ENCODE measurements at regions of chr9 and their contacts with region 1.

Region 1: DNA sequence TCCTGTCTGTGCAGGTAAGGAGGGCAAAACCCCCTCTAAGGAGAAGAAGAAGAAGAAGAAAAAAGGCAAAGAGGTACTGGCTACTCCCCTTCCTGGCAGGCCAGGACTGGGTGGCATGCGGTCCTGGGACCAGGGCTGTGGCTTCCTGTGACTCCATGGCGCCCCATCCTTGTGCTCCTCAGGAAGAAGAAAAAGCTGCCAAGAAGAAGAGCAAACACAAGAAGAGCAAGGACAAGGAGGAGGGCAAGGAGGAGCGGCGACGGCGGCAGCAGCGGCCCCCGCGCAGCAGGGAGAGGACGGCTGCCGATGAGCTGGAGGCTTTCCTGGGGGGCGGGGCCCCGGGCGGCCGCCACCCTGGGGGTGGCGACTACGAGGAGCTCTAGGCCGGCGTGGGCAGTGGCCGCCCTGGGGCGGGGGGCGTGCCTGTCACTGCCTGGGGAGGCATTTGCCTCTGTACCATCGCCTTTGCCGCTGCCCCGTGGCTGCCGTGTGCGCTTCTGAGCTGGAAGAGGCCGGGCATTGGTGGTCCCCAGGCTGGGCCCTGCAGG is 2.1 kb upstream of the AJM1 start:
- DNase-seq: no peak
- H3K4me3 ChIP-seq: no peak overlapping the region
- H3K27ac ChIP-seq: no peak overlapping the region
- H3K4me1 ChIP-seq: peaks cover 3% of the 10 kb centered on the region
- H3K27me3 ChIP-seq: peaks cover 2 to 10% of the 10 kb centered on the region in 2 experiments
- CTCF ChIP-seq: no peak
- POLR2A ChIP-seq: no peak

Region 2: GRCh38 chr9:136807281-136808074 is 32.7 kb before region 1 on chr9 and contains the start of gene RABL6:
- CTCF ChIA-PET with region 1: interaction called, 13 read pairs
- POLR2A ChIA-PET with region 1: no interaction called
- dilution Hi-C with region 1: no loop called
- intact Hi-C with region 1: loop called (anchors 5 kb)
- DNase-seq: peak; percentile 80
- H3K4me3 ChIP-seq: peak within 1 kb of the TSS; percentile 78 to 98 (median 90)
- H3K27ac ChIP-seq: peak within 1 kb of the TSS; percentile 59
- H3K4me1 ChIP-seq: peaks cover 15% of the 10 kb centered on the region
- H3K27me3 ChIP-seq: peaks cover 0 to under 1% of the 10 kb centered on the region in 2 experiments
- CTCF ChIP-seq: no peak
- POLR2A ChIP-seq: peak; percentile 94
- total RNA-seq, gene RABL6: 112 TPM in 2 replicates